Mucosa of descending colon (tissue), 3 donors: ENCODE measurements at regions of chr5 and their contacts with region 1.

Region 1: DNA sequence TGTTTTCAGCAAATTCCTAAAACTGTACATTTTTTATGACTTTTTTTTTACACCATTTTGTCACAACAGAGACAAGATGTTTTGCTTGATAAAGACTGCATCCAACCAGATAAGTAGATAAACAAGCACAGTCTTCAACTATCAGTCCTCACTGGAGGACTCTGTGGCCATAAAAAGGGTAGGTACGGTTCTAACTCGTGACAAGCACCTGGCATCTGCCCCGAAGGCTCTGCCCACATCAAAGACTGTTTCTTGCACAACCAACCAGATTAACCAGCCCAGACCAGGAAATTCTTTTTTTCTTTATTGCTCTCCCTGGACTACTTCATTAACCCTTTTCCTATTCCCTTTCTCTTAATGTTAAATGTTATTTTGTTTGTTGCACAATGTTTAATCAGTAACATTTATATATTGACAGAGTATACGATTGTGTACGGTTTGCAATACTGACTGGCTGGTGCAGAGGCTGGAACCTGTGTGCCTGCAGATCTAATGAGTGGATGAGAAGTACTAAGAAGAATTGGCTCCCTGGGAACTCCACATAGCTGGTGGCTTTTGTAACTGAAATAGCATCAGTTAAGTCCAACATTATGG is 74.1 kb downstream of the SERINC5 start:
- DNase-seq: peak; percentile 84 to 92 (median 85)
- ATAC-seq: peak; percentile 88
- H3K4me3 ChIP-seq: no peak overlapping the region
- H3K4me1 ChIP-seq: peaks cover 59% of the 10 kb centered on the region
- CTCF ChIP-seq: no peak

Region 2: GRCh38 chr5:80243567-80243966 is 61.9 kb after region 1 on chr5:
- intact Hi-C with region 1: no loop called
- DNase-seq: no peak
- ATAC-seq: no peak
- H3K4me3 ChIP-seq: no peak overlapping the region
- H3K4me1 ChIP-seq: peaks cover 47% of the 10 kb centered on the region
- CTCF ChIP-seq: no peak

Region 3: GRCh38 chr5:80255732-80256479 is 74.2 kb after region 1 on chr5 and contains the start of gene SERINC5:
- intact Hi-C with region 1: loop called in 1 of 2 experiments (anchors 10 kb)
- DNase-seq: peak; percentile 85 to 93 (median 92)
- ATAC-seq: peak; percentile 82
- H3K4me3 ChIP-seq: peak within 1 kb of the TSS; percentile 50
- H3K4me1 ChIP-seq: peaks cover 28% of the 10 kb centered on the region
- CTCF ChIP-seq: no peak
- total RNA-seq, gene SERINC5: 66.6 to 153 (median 126) TPM